Right cardiac atrium (tissue), 5 donors: ENCODE measurements at regions of chr7 and their contacts with region 1.

Region 1: GRCh38 chr7:32891800-32892520 is 400 bp upstream of the KBTBD2 start:
- DNase-seq: peak; percentile 98 to 99 (median 99)
- ATAC-seq: peak; percentile 92 to 93
- H3K4me3 ChIP-seq: peak overlapping the region; percentile 81
- H3K27ac ChIP-seq: peak overlapping the region; percentile 98
- H3K4me1 ChIP-seq: no peaks in the 10 kb centered on the region
- H3K27me3 ChIP-seq: no peaks in the 10 kb centered on the region

Region 2: GRCh38 chr7:32846701-32847100 is 45.3 kb before region 1 on chr7:
- intact Hi-C with region 1: loop called in 1 of 4 experiments (anchors 5 kb)
- DNase-seq: peak; percentile 87 to 96 (median 93)
- ATAC-seq: peak; percentile 97 to 99
- H3K4me3 ChIP-seq: no peak overlapping the region
- H3K27ac ChIP-seq: no peak overlapping the region
- H3K4me1 ChIP-seq: no peaks in the 10 kb centered on the region
- H3K27me3 ChIP-seq: no peaks in the 10 kb centered on the region

Region 3: DNA sequence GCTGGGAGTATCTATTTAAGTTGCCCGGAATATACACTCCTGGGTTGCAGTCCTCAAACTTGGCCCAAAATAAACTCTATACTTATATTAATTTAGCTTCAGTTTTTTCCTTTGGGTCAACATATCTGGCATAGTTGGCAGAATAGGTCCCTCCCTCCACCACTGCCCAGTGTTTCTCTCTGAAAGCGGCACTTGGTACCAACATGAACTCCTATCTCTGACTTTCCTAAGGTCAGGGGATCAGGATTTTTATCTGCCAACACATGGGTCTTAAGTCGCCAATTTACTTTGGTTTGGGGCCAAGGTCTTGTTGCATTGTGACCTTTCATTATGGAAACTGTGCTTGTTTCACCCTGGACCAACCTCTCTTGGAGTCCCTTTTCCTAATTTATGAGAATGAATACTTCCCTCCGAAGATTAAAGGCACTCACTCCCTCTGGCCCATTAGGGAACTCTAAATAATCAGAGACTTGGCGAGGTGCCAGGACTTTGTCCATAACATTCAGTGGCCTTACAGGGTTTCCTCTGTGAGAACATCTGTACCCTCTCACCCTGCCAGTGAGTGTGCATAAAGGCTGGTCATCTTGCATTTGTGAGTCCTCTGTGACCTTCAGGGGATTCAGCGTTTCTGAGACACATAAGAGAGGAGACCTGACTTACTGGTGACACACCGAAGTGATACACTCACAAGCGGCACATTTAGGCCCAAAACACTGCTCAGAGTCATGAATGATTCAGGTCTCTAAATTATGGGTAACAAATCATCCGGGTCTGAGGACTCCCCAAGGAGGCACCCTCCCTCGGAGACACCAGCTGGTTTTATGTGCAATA is 45.6 kb after region 1 on chr7:
- intact Hi-C with region 1: loop called in 1 of 4 experiments (anchors 5 kb)
- DNase-seq: peak in 2 of 3 donors; percentile 60 to 78
- ATAC-seq: peak; percentile 32 to 57
- H3K4me3 ChIP-seq: no peak overlapping the region
- H3K27ac ChIP-seq: peak overlapping the region; percentile 57
- H3K4me1 ChIP-seq: peaks cover 8% of the 10 kb centered on the region
- H3K27me3 ChIP-seq: no peaks in the 10 kb centered on the region